Esophagus muscularis mucosa (tissue), 4 donors: ENCODE measurements at regions of chr9 and their contacts with region 1.

Region 1: GRCh38 chr9:10331157-10331556 is 281.6 kb downstream of the PTPRD start:
- DNase-seq: no peak
- H3K4me3 ChIP-seq: no peak overlapping the region
- H3K27ac ChIP-seq: no peak overlapping the region
- H3K4me1 ChIP-seq: no peaks in the 10 kb centered on the region
- H3K27me3 ChIP-seq: no peaks in the 10 kb centered on the region
- CTCF ChIP-seq: no peak
- EP300 ChIP-seq: no peak
- POLR2A ChIP-seq: no peak

Region 2: GRCh38 chr9:10354591-10354990 is 23.4 kb after region 1 on chr9:
- intact Hi-C with region 1: loop called (anchors 2 kb)
- DNase-seq: no peak
- H3K4me3 ChIP-seq: no peak overlapping the region
- H3K27ac ChIP-seq: no peak overlapping the region
- H3K4me1 ChIP-seq: no peaks in the 10 kb centered on the region
- H3K27me3 ChIP-seq: no peaks in the 10 kb centered on the region
- CTCF ChIP-seq: no peak
- EP300 ChIP-seq: no peak
- POLR2A ChIP-seq: no peak

Region 3: DNA sequence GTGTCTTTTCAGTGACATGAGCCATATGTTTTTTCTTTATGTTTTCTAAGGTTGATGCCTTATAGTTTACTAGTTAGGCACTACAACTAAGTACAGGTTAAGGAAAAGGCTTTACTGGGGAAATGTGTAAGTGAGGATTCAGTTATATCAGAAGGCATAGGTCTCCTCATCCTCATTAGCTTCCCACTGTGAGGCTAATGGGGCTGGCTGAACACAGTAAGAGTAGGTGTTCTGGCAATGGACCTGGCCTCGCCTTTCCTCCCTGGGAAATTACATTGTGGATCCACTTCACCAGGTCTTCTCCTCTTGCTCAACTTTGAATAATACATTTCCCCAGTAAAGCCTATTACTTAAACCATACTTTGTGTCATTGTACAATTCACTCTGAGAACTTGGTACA is 56.1 kb after region 1 on chr9:
- intact Hi-C with region 1: no loop called
- DNase-seq: no peak
- H3K4me3 ChIP-seq: no peak overlapping the region
- H3K27ac ChIP-seq: no peak overlapping the region
- H3K4me1 ChIP-seq: no peaks in the 10 kb centered on the region
- H3K27me3 ChIP-seq: no peaks in the 10 kb centered on the region
- CTCF ChIP-seq: no peak
- EP300 ChIP-seq: no peak
- POLR2A ChIP-seq: no peak